Ascending aorta (tissue), 2 donors: ENCODE measurements at regions of chr6 and their contacts with region 1.

Region 1: DNA sequence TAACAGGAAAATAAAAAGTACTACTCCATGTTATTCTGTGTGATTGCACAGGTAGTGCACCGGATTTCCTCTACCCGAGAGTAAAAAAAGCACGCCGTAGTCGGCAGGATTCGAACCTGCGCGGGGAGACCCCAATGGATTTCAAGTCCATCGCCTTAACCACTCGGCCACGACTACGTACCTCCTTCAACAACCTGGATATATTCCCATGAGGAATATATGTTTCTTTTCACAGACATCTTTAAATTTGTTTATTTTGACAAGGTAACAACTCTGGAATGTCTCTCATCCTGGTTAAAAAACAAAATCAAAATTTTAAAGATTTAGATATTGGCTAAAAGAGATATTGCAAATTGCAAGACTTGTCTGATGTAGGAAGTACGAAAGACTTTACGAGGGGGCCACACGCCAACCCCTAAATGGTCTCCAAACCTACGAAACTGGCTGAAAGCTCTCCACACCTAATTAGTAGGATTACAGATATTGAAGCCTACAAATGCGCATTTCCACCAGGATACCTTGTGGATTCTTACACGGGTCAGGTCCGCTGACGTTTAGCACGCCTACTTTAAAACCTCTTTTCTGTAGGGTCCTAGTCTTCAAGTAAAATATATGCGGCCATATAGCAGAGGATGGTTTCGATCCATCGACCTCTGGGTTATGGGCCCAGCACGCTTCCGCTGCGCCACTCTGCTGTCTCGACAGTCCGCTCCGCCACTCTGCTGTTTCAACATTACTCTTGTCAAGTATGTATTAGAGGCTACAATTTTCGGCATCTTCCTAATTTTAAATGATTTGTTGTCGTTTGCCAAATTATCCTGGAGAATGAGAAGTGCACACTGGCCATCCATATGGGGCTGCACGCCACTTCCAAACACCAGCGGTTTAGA is 52.3 kb upstream of the BTN3A2 start:
- DNase-seq: peak; percentile 39 to 85
- H3K4me3 ChIP-seq: peak overlapping the region; percentile 47 to 62
- H3K27ac ChIP-seq: peak overlapping the region; percentile 30 to 47
- H3K4me1 ChIP-seq: peaks cover 0 to 2% of the 10 kb centered on the region in 2 donors
- H3K27me3 ChIP-seq: no peaks in the 10 kb centered on the region
- CTCF ChIP-seq: no peak

Region 2: DNA sequence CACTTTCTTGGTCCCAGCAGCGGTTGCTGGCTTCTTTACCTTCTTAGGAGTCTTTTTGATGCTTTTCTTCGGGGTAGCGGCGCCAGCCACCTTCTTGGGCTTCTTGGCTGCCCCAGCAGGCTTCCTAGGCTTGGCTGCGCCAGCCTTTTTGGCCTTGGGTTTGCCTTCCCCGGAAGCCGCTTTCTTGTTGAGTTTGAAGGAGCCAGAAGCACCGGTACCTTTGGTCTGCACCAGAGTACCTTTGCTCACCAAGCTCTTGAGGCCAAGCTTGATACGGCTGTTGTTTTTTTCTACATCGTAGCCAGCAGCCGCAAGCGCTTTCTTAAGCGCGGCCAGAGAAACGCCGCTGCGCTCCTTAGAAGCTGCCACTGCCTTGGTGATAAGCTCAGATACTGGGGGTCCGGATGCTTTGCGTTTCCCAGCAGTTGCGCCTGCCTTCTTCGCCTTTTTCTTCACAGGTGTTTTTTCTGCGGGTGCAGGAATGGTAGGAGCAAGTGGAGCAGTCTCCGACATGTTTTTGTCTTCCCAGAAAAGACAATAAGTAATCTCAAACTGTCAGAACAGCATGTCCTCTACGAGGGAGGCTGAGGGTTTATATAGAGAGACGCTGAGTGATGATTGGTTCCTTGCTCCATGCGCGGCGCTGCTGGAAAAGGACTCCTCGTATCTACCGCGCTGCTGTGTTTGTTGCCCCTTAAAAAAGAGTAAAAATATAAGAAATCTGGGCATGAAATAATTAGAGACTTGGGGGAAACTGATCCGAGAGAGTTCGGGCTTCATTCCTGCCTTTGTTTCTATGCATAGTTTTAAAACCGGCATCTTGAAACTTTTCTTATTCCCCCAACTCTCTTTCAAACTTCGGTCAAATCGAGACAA is 78.1 kb before region 1 on chr6:
- intact Hi-C with region 1: loop called (anchors 2 kb)
- DNase-seq: peak in 1 of 2 donors; percentile 77
- H3K4me3 ChIP-seq: peak overlapping the region; percentile 61 to 79
- H3K27ac ChIP-seq: peak overlapping the region; percentile 84 to 86
- H3K4me1 ChIP-seq: peaks cover 0 to 7% of the 10 kb centered on the region in 2 donors
- H3K27me3 ChIP-seq: no peaks in the 10 kb centered on the region
- CTCF ChIP-seq: no peak

Region 3: DNA sequence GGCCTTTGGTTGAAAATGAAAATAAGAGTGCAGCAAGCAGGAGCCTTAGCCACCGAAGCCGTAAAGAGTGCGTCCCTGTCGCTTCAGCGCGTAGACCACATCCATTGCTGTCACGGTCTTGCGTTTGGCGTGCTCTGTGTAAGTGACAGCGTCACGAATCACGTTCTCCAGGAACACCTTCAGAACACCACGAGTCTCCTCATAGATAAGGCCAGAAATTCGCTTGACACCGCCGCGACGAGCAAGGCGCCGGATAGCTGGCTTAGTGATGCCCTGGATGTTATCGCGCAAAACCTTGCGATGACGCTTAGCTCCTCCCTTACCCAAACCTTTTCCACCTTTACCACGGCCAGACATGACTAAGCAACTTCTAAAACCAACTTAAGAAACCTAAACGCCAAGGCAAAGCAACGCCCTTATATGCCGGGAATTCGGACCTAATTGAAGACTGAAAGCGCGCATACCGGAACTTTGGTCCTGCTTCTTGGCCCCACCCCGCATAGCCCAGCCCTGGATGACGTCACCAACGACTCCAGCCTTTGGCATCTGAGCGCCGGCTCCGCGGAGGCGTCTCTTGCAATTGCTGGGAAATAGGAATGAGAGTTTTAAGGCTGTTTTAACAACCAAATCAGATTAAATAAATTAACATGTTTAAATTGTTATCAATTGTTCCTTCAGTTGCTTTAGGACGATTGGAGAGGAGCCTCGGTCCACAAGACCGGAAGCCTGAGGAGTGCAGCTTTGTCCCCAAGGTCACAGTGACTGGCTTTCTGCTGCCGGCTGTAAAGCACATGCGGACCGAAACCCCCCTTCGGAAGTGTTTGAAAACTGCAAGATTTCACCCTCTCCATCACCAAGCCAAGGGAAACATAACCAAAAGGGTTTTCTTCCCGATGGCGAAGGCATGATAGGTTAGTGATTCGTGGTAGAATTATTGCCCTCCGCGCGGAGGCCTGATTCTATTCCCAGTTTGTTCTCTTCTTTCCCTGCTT is 27.3 kb before region 1 on chr6:
- intact Hi-C with region 1: loop called (anchors 2 kb)
- DNase-seq: peak; percentile 92 to 99
- H3K4me3 ChIP-seq: peak overlapping the region; percentile 71 to 79
- H3K27ac ChIP-seq: peak overlapping the region; percentile 93 to 97
- H3K4me1 ChIP-seq: no peaks in the 10 kb centered on the region
- H3K27me3 ChIP-seq: no peaks in the 10 kb centered on the region
- CTCF ChIP-seq: no peak